Left colon (tissue), 2 donors: ENCODE measurements at regions of chr1 and their contacts with region 1.

Region 1: GRCh38 chr1:198643808-198644207 is 5.0 kb downstream of the PTPRC start:
- DNase-seq: no peak
- ATAC-seq: no peak

Region 2: DNA sequence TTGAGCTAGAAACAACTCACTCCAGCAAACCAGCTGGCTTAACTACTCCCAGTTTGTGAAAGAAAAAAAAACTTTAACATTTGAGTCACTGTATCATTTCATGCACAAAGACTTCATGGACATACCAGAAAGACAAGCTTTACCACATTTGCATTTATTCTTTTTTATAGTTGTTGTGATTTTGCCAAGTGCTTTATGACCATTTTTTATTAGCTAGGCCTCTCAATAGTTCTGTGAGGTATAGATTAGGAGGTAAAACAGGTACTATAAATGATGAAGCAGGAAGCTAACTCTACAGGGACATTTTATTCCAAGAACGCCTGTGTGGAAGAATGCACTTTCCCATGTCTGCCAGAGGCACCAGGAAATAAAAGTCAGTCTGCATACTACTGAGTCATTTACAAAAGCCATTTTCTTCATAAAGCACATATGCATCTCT is 860.3 kb before region 1 on chr1:
- intact Hi-C with region 1: no loop called
- DNase-seq: no peak
- ATAC-seq: peak; percentile 90

Region 3: GRCh38 chr1:198481661-198482060 is 162.1 kb before region 1 on chr1:
- intact Hi-C with region 1: no loop called
- DNase-seq: no peak
- ATAC-seq: peak; percentile 26

Region 4: GRCh38 chr1:198529414-198529813 is 114.4 kb before region 1 on chr1:
- intact Hi-C with region 1: no loop called
- DNase-seq: no peak
- ATAC-seq: no peak

Region 5: GRCh38 chr1:198676253-198676652 is 32.4 kb after region 1 on chr1:
- intact Hi-C with region 1: loop called in 1 of 2 experiments (anchors 2 kb)
- DNase-seq: no peak
- ATAC-seq: no peak